ENCODE measurements at regions of chr3 and their contacts with region 1.

Region 1: DNA sequence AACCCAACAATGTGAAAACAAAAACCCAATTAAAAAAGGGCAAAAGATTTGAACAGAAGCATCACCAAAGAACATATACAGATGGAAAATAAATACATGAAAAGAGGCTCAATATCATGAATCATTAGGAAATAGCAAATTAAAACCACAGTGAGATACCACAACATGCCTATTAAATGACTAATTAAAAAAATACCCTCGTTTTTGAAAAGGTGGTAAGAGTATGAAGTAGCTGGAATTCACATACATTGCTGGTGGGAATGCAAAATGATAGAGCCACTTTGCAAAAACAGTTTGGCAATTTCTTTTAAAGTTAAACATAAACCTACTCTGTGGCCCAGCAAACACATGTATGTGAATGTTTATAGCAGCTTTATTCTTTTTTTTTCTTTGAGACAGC is 75.8 kb downstream of the B3GNT5 start:
- DNase-seq: peak; percentile 76
- H3K4me3 ChIP-seq: no peak overlapping the region
- H3K27ac ChIP-seq: no peak overlapping the region
- H3K4me1 ChIP-seq: peaks cover 19% of the 10 kb centered on the region
- H3K27me3 ChIP-seq: no peaks in the 10 kb centered on the region
- CTCF ChIP-seq: no peak

Region 2: DNA sequence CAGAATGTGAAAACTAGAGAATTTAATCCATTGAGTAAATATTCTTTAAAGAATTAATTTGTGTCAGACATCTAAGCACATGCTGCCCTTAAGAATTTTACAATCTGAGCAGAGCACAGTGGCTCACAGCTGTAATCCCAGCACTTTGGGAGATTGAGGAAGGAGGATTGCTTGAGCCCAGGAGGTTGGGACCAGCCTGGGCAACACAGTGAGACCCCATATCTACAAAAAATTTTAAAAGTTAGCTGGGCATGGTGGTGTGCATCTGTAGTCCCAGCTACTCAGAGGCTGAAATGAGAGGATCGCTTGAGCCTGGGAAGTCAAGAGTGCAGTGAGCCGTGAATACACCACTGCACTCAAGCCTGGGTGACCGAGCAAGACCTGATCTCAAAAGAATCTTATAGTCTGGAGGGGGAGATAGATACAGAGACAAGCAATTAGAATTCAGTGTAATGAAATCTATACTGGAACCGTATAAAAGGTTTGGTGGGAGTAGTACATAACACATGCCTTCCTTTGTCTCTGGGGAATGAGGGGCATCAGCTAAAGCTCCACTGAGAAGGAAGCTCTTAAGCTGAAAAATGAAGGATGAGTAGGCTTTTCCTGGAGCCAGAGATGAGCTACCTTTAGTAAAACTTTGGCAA is 514.3 kb before region 1 on chr3:
- CTCF ChIA-PET with region 1: no interaction called
- dilution Hi-C with region 1: no loop called
- in situ Hi-C with region 1: no loop called
- intact Hi-C with region 1: no loop called
- DNase-seq: no peak
- H3K4me3 ChIP-seq: no peak overlapping the region
- H3K27ac ChIP-seq: no peak overlapping the region
- H3K4me1 ChIP-seq: no peaks in the 10 kb centered on the region
- H3K27me3 ChIP-seq: no peaks in the 10 kb centered on the region
- CTCF ChIP-seq: no peak

Region 3: GRCh38 chr3:183188895-183189462 is 139.8 kb before region 1 on chr3:
- CTCF ChIA-PET with region 1: interaction called, 4 read pairs
- dilution Hi-C with region 1: no loop called
- in situ Hi-C with region 1: no loop called
- intact Hi-C with region 1: loop called (anchors 1 kb)
- DNase-seq: no peak
- H3K4me3 ChIP-seq: no peak overlapping the region
- H3K27ac ChIP-seq: no peak overlapping the region
- H3K4me1 ChIP-seq: peaks cover 13% of the 10 kb centered on the region
- H3K27me3 ChIP-seq: no peaks in the 10 kb centered on the region
- CTCF ChIP-seq: peak; percentile 13 to 32

Measured in mammary epithelial cell (primary cell).